Caco-2 (cell line): ENCODE measurements at regions of chr3 and their contacts with region 1.

Region 1: GRCh38 chr3:154334973-154335420 is 10.7 kb upstream of the DHX36 start:
- DNase-seq: peak in 1 of 2 experiments; percentile 34
- H3K4me3 ChIP-seq: no peak overlapping the region
- H3K4me3 Mint-ChIP-seq: no peak overlapping the region
- H3K27ac Mint-ChIP-seq: no peak overlapping the region
- H3K4me1 ChIP-seq: peaks cover 19% of the 10 kb centered on the region
- H3K4me1 Mint-ChIP-seq: peaks cover 14% of the 10 kb centered on the region
- H3K27me3 ChIP-seq: no peaks in the 10 kb centered on the region
- H3K27me3 Mint-ChIP-seq: no peaks in the 10 kb centered on the region
- CTCF ChIP-seq: peak; percentile 44 to 55

Region 2: DNA sequence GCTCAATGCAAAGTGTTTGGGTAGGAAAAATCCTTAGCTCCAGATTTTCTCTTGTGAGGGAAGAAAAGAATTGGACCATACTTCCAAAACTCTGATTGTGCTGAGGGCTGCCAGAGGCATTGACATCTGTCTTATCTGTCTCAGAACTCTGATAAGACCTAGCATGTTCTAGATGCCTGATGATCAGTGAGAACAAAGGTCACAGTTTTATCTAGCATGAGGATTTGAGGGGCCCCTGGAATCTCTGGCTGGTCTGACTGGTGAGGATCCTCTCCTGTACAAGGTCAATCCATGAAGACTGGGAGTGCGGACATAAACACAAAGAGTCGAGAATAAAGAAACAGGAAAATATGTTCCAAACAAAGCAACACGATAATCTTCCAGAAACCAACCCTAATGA is 54.9 kb after region 1 on chr3:
- CTCF ChIA-PET with region 1: no interaction called
- POLR2A ChIA-PET with region 1: no interaction called
- intact Hi-C with region 1: loop called (anchors 1 kb)
- DNase-seq: peak; percentile 84 to 89
- H3K4me3 ChIP-seq: no peak overlapping the region
- H3K4me3 Mint-ChIP-seq: peak overlapping the region; percentile 51
- H3K27ac Mint-ChIP-seq: peak overlapping the region; percentile 70
- H3K4me1 ChIP-seq: peaks cover 35% of the 10 kb centered on the region
- H3K4me1 Mint-ChIP-seq: peaks cover 31% of the 10 kb centered on the region
- H3K27me3 ChIP-seq: no peaks in the 10 kb centered on the region
- H3K27me3 Mint-ChIP-seq: no peaks in the 10 kb centered on the region
- CTCF ChIP-seq: no peak

Region 3: DNA sequence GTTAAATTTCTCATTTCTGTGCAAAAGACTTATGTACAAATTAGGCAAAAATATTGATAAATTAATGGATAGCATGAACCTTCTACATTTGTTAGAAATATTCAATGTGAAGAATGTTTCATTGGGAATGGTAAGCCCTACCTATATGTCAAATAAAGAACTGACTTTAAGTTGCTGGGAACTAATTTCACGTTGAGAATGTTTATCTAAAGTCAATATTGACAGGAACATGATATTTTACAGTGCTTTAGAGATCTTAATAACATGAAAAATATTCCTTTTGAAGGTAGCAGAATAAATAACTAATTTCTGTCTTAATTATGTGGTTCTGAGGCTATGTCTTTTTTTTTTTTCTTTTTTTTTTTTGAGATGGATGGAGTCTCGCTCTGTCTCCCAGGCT is 117.0 kb after region 1 on chr3:
- CTCF ChIA-PET with region 1: no interaction called
- POLR2A ChIA-PET with region 1: no interaction called
- intact Hi-C with region 1: loop called (anchors 5 kb)
- DNase-seq: no peak
- H3K4me3 ChIP-seq: no peak overlapping the region
- H3K4me3 Mint-ChIP-seq: no peak overlapping the region
- H3K27ac Mint-ChIP-seq: no peak overlapping the region
- H3K4me1 ChIP-seq: no peaks in the 10 kb centered on the region
- H3K4me1 Mint-ChIP-seq: no peaks in the 10 kb centered on the region
- H3K27me3 ChIP-seq: no peaks in the 10 kb centered on the region
- H3K27me3 Mint-ChIP-seq: no peaks in the 10 kb centered on the region
- CTCF ChIP-seq: no peak

Region 4: GRCh38 chr3:154730186-154730585 is 395.2 kb after region 1 on chr3:
- CTCF ChIA-PET with region 1: no interaction called
- POLR2A ChIA-PET with region 1: no interaction called
- intact Hi-C with region 1: loop called (anchors 5 kb)
- DNase-seq: no peak
- H3K4me3 ChIP-seq: no peak overlapping the region
- H3K4me3 Mint-ChIP-seq: no peak overlapping the region
- H3K27ac Mint-ChIP-seq: no peak overlapping the region
- H3K4me1 ChIP-seq: no peaks in the 10 kb centered on the region
- H3K4me1 Mint-ChIP-seq: no peaks in the 10 kb centered on the region
- H3K27me3 ChIP-seq: no peaks in the 10 kb centered on the region
- H3K27me3 Mint-ChIP-seq: no peaks in the 10 kb centered on the region
- CTCF ChIP-seq: no peak